Dorsolateral prefrontal cortex (tissue), 120 donors: ENCODE measurements at regions of chr9 and their contacts with region 1.

Region 1: DNA sequence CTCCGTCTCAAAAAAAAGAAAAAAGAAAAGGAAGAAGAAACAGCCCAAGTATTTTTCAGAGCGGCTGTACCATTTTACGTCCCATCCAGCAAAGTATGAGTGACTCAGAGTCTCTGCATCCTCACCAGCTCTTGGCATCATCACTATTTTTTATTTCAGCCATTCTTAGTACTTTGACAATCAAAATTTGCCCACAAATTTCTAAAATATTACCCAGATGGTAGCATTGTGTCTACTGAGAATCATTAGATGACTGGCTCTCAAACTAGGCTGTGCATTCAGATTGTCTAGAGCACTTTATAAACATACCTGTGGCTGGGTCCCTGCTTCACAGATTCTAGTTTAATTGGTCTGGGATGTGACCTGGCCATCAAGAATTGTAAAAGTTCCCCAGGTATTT is 21.6 kb upstream of the MELK start:
- DNase-seq: no peak
- H3K4me3 ChIP-seq: no peak overlapping the region
- H3K27ac ChIP-seq: no peak overlapping the region
- H3K27me3 ChIP-seq: no peaks in the 10 kb centered on the region
- CTCF ChIP-seq: no peak

Region 2: GRCh38 chr9:36450110-36450732 is 100.9 kb before region 1 on chr9:
- intact Hi-C with region 1: loop called in 1 of 2 experiments (anchors 10 kb)
- DNase-seq: peak in 1 of 10 donors; percentile 37
- H3K4me3 ChIP-seq: no peak overlapping the region
- H3K27ac ChIP-seq: no peak overlapping the region
- H3K27me3 ChIP-seq: no peaks in the 10 kb centered on the region
- CTCF ChIP-seq: peak; percentile 65 to 96 (median 82)